ENCODE measurements at regions of chr3 and their contacts with region 1.

Region 1: DNA sequence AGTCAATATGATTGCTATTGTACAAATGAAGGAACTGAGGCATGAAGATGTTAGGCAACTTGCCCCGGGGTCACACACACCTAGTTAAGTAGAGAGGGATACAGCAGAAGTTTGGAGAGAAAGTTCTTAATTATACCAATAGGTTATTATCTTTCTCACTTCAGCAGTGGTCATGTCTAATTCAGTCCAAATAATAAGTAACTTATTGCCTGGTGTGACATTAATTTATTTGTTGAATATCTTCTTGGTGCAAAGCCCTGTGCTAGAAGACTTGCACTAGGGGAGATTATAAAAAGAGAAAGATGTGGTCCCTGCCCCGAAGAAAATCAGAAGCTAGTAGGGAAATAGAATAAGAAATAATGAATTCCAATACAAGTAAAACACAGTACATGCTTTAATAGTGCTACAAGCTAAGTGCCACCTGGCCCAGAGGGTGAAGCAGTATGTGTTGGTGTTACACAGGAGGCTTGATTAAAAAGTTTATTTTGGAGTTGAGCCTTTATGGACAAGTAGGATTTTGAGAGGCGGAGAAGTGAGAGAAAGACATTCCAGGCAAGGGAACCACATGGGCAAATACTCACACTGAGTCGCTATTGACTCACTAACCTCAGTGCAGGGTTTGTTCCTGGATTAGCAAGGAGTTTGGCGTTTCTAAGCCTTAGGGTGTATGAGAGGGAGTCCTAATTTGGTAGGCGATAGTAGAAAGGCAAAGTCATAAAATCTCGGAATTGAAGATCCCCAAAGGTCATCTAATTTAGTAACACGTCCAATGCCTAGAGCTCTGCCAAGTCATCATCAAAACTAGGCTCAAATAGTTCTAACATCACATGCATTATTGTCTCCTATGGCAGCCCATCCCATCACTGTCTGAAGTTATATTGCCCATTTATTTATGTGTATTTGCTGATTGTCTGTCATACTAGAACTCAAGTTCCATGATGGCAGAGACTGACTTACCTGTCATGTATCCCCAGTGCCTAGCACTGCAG is 19.2 kb upstream of the GSK3B start:
- DNase-seq: peak; percentile 99
- H3K4me3 ChIP-seq: no peak overlapping the region
- H3K27ac ChIP-seq: peak overlapping the region; percentile 89
- H3K4me1 ChIP-seq: peaks cover 46% of the 10 kb centered on the region
- H3K27me3 ChIP-seq: no peaks in the 10 kb centered on the region
- CTCF ChIP-seq: no peak

Region 2: GRCh38 chr3:120129718-120130513 is 16.5 kb after region 1 on chr3:
- CTCF ChIA-PET with region 1: no interaction called
- dilution Hi-C with region 1: no loop called
- in situ Hi-C with region 1: no loop called
- intact Hi-C with region 1: loop called (anchors 2 kb)
- DNase-seq: peak; percentile 28
- H3K4me3 ChIP-seq: no peak overlapping the region
- H3K27ac ChIP-seq: no peak overlapping the region
- H3K4me1 ChIP-seq: no peaks in the 10 kb centered on the region
- H3K27me3 ChIP-seq: no peaks in the 10 kb centered on the region
- CTCF ChIP-seq: no peak

Region 3: GRCh38 chr3:120147072-120147871 is 33.9 kb after region 1 on chr3:
- CTCF ChIA-PET with region 1: no interaction called
- dilution Hi-C with region 1: no loop called
- in situ Hi-C with region 1: no loop called
- intact Hi-C with region 1: loop called (anchors 2 kb)
- DNase-seq: peak; percentile 61
- H3K4me3 ChIP-seq: no peak overlapping the region
- H3K27ac ChIP-seq: peak overlapping the region; percentile 96
- H3K4me1 ChIP-seq: peaks cover 58% of the 10 kb centered on the region
- H3K27me3 ChIP-seq: no peaks in the 10 kb centered on the region
- CTCF ChIP-seq: peak; percentile 33 to 46

Region 4: DNA sequence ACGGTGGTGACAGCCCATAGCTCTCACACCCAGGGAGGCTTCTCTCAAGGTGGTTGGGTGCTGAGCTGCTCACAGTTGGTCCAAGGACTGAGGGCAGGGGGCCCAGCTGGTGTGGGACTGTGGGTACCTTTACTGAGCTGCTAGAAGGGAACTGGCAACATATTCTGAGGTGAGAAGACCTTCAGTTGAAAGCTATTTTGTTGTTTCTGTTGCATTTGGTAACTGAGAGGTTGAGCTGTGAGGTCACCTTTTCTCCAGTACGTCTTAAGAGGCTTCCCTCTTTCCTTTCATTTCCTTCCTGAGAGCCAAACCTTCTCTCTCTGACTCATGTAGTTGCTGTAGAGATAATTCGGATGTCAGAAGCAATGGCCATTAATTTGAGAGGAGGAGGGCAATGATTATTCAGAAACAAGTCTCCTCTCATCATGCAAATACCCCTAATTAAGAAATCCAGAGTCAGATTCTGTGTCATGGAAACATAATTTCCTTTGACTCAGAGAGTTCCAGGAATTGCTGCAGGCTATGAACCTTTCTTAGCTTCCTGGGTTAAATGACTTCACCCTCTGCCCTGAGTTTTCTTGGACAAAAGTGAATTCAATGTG is 39.8 kb after region 1 on chr3:
- CTCF ChIA-PET with region 1: no interaction called
- dilution Hi-C with region 1: no loop called
- in situ Hi-C with region 1: no loop called
- intact Hi-C with region 1: loop called (anchors 2 kb)
- DNase-seq: peak; percentile 96
- H3K4me3 ChIP-seq: no peak overlapping the region
- H3K27ac ChIP-seq: peak overlapping the region; percentile 97
- H3K4me1 ChIP-seq: peaks cover 30% of the 10 kb centered on the region
- H3K27me3 ChIP-seq: no peaks in the 10 kb centered on the region
- CTCF ChIP-seq: no peak

Region 5: GRCh38 chr3:120160050-120160449 is 46.6 kb after region 1 on chr3:
- CTCF ChIA-PET with region 1: no interaction called
- dilution Hi-C with region 1: no loop called
- in situ Hi-C with region 1: no loop called
- intact Hi-C with region 1: loop called (anchors 1 kb)
- DNase-seq: peak; percentile 99
- H3K4me3 ChIP-seq: no peak overlapping the region
- H3K27ac ChIP-seq: peak overlapping the region; percentile 92
- H3K4me1 ChIP-seq: peaks cover 36% of the 10 kb centered on the region
- H3K27me3 ChIP-seq: no peaks in the 10 kb centered on the region
- CTCF ChIP-seq: no peak

Region 6: GRCh38 chr3:120170223-120170622 is 56.8 kb after region 1 on chr3:
- CTCF ChIA-PET with region 1: no interaction called
- dilution Hi-C with region 1: no loop called
- in situ Hi-C with region 1: no loop called
- intact Hi-C with region 1: loop called (anchors 2 kb)
- DNase-seq: peak; percentile 99
- H3K4me3 ChIP-seq: no peak overlapping the region
- H3K27ac ChIP-seq: peak overlapping the region; percentile 87
- H3K4me1 ChIP-seq: peaks cover 37% of the 10 kb centered on the region
- H3K27me3 ChIP-seq: no peaks in the 10 kb centered on the region
- CTCF ChIP-seq: no peak

Region 7: GRCh38 chr3:120487191-120487650 is 373.8 kb after region 1 on chr3:
- CTCF ChIA-PET with region 1: no interaction called
- dilution Hi-C with region 1: no loop called
- in situ Hi-C with region 1: no loop called
- intact Hi-C with region 1: no loop called
- DNase-seq: no peak
- H3K4me3 ChIP-seq: no peak overlapping the region
- H3K27ac ChIP-seq: no peak overlapping the region
- H3K4me1 ChIP-seq: no peaks in the 10 kb centered on the region
- H3K27me3 ChIP-seq: no peaks in the 10 kb centered on the region
- CTCF ChIP-seq: no peak

Region 8: GRCh38 chr3:120637851-120638559 is 524.6 kb after region 1 on chr3:
- CTCF ChIA-PET with region 1: no interaction called
- dilution Hi-C with region 1: no loop called
- in situ Hi-C with region 1: no loop called
- intact Hi-C with region 1: no loop called
- DNase-seq: no peak
- H3K4me3 ChIP-seq: no peak overlapping the region
- H3K27ac ChIP-seq: no peak overlapping the region
- H3K4me1 ChIP-seq: no peaks in the 10 kb centered on the region
- H3K27me3 ChIP-seq: peaks cover 2% of the 10 kb centered on the region
- CTCF ChIP-seq: no peak